Endothelial cell of umbilical vein (primary cell): ENCODE measurements at regions of chr2 and their contacts with region 1.

Region 1: DNA sequence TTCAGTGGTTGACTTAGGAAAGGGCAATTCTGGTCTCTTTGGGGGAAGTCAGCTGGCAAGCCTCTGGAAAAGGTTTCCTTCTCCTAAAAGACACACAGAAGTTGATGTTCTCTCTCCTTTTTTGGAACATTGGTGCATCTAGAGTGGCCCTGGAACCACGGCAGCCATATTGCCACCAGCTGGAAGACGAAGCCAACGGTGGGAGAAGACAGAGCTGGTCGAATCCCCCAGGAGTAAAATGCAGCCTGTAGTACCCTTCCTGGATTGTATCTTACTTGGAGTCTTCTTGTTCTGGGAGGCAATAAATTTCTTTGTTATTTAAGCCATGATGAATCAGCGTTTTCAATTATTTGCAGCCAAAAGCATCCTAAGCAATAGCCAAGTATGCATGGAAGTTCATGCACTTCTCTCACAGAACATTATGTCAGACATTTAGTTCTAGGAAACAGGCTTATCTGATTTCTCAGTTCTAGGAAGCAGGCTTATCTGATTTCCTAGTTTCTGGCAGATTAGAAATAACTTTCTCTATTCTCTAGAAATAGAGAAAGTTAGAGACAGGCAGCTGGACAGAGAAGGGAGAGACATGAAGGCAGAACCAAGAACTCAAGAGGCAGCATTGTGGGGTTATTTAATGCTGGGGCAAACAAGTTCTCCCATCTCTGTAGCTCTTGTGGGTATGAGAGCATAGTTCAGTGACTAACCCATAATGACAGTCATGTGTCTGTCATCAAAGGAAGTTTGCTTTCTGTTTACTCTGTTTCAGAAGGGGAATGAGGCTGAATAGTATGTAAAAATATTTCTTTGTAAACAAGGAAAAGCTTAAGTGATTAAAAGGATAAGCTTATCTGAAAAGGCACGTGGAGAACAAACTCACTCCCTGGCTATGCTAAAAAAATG is 40.5 kb upstream of the NABP1 start:
- DNase-seq: peak; percentile 66
- H3K4me3 ChIP-seq: peak overlapping the region in 1 of 3 experiments; percentile 3
- H3K27ac ChIP-seq: peak overlapping the region; percentile 77
- H3K4me1 ChIP-seq: peaks cover 22% of the 10 kb centered on the region
- H3K27me3 ChIP-seq: no peaks in the 10 kb centered on the region
- CTCF ChIP-seq: no peak
- POLR2A ChIP-seq: no peak

Region 2: GRCh38 chr2:191625016-191625415 is 12.4 kb before region 1 on chr2:
- CTCF ChIA-PET with region 1: interaction called, 10 read pairs
- POLR2A ChIA-PET with region 1: no interaction called
- dilution Hi-C with region 1: no loop called
- intact Hi-C with region 1: loop called (anchors 1 kb)
- DNase-seq: peak; percentile 51
- H3K4me3 ChIP-seq: no peak overlapping the region
- H3K27ac ChIP-seq: peak overlapping the region; percentile 2
- H3K4me1 ChIP-seq: peaks cover 13% of the 10 kb centered on the region
- H3K27me3 ChIP-seq: no peaks in the 10 kb centered on the region
- CTCF ChIP-seq: no peak
- POLR2A ChIP-seq: no peak